AG04450 (cell line): ENCODE measurements at regions of chr3 and their contacts with region 1.

Region 1: GRCh38 chr3:45968706-45969105 is 25.4 kb downstream of the CXCR6 start:
- DNase-seq: no peak
- H3K4me3 ChIP-seq: no peak overlapping the region
- H3K27ac ChIP-seq: no peak overlapping the region
- H3K27me3 ChIP-seq: no peaks in the 10 kb centered on the region
- CTCF ChIP-seq: no peak

Region 2: GRCh38 chr3:45915518-45916231 is 53.0 kb before region 1 on chr3:
- CTCF ChIA-PET with region 1: no interaction called
- POLR2A ChIA-PET with region 1: no interaction called
- DNase-seq: peak; percentile 70
- H3K4me3 ChIP-seq: no peak overlapping the region
- H3K27ac ChIP-seq: peak overlapping the region; percentile 52
- H3K27me3 ChIP-seq: no peaks in the 10 kb centered on the region
- CTCF ChIP-seq: no peak

Region 3: DNA sequence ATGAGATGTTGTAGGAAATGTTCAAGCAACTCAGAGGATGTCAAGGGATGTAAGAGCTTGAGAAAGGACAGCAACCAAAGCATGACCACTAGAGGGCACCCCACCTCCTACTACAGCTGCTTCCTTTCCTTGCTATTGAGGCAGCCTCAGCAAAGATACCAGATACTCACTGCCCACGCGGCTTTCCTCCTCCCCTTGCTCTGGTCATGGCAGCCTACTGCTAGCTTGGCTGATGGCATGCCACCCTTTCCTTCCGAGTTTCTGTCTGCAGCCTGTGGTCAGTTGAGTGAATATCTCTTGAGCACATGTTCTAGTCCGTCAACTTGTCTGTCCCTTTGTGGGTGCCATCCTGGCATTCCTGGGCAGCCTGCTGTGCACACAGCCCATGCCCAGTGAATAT is 29.8 kb before region 1 on chr3:
- CTCF ChIA-PET with region 1: interaction called, 16 read pairs
- POLR2A ChIA-PET with region 1: no interaction called
- DNase-seq: peak; percentile 84
- H3K4me3 ChIP-seq: no peak overlapping the region
- H3K27ac ChIP-seq: no peak overlapping the region
- H3K27me3 ChIP-seq: no peaks in the 10 kb centered on the region
- CTCF ChIP-seq: peak; percentile 93

Region 4: GRCh38 chr3:45958321-45958791 is 10.3 kb before region 1 on chr3:
- CTCF ChIA-PET with region 1: interaction called, 11 read pairs
- POLR2A ChIA-PET with region 1: interaction called, 3 read pairs
- DNase-seq: no peak
- H3K4me3 ChIP-seq: no peak overlapping the region
- H3K27ac ChIP-seq: no peak overlapping the region
- H3K27me3 ChIP-seq: no peaks in the 10 kb centered on the region
- CTCF ChIP-seq: no peak